ENCODE measurements at regions of chr19 and their contacts with region 1.

Region 1: GRCh38 chr19:29680447-29680846 is 15.2 kb downstream of the PLEKHF1 start:
- DNase-seq: peak; percentile 80 to 85 (median 83)
- H3K4me3 ChIP-seq: peak overlapping the region in 3 of 7 experiments; percentile 13 to 45 (median 23)
- H3K27ac ChIP-seq: peak overlapping the region in 1 of 2 experiments; percentile 4
- H3K4me1 ChIP-seq: peaks cover 0 to 38% (median 30%) of the 10 kb centered on the region in 4 experiments
- H3K27me3 ChIP-seq: no peaks in the 10 kb centered on the region

Region 2: GRCh38 chr19:29645911-29646310 is 34.5 kb before region 1 on chr19:
- CTCF ChIA-PET with region 1: no interaction called
- POLR2A ChIA-PET with region 1: no interaction called
- DNase-seq: peak; percentile 68 to 83 (median 76)
- H3K4me3 ChIP-seq: peak overlapping the region in 3 of 7 experiments; percentile 42 to 50 (median 42)
- H3K27ac ChIP-seq: no peak overlapping the region
- H3K4me1 ChIP-seq: peaks cover 6 to 22% (median 18%) of the 10 kb centered on the region in 4 experiments
- H3K27me3 ChIP-seq: no peaks in the 10 kb centered on the region

Region 3: DNA sequence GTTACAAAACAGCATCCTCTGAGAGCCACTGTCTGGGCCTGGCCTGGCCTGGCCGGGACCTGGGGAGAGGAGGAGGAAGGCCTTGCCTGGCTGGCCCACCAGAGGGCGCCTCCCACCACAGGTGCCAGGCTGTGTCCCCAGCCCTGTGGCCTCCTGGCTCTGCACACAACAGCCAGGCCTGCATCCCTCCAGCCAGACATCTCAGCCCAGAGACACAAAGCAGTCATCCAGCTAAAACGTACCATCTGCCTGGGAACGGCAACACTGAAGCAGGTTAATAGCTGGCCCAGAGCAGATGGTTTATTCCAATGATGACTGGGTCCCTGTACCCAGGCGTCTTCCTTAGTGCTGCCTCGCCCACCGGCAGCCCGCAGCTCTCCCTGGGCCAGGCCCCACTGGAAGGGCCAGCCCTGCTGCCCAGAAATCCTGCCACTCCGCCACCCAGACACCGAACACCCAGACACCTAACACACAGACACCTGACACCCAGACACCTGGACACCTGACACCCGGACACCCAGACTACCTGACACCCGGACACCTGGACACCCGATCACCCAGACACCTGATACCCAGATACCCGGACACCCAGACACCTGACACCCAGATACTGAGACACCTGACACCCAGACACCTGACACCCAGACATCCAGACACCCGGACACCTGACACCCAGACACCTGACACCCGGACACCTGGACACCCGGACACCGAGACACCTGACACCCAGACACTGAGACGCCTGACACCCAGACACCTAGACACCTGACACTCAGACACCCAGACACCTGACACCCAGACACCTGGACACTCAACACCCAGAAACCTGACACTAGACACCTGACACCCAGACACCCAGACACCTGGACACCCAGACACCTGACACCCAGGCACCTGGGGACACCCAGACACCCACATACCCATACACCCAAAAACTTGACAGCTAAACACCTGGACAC is 14.5 kb after region 1 on chr19:
- CTCF ChIA-PET with region 1: interaction called, 11 read pairs
- POLR2A ChIA-PET with region 1: no interaction called
- DNase-seq: peak; percentile 74 to 85 (median 83)
- H3K4me3 ChIP-seq: no peak overlapping the region
- H3K27ac ChIP-seq: no peak overlapping the region
- H3K4me1 ChIP-seq: peaks cover 0 to 2% (median 0%) of the 10 kb centered on the region in 4 experiments
- H3K27me3 ChIP-seq: no peaks in the 10 kb centered on the region

Measured in common myeloid progenitor, CD34-positive (primary cell).